OCI-LY7 (cell line): ENCODE measurements at regions of chr11 and their contacts with region 1.

Region 1: GRCh38 chr11:130314750-130315285 is at the start of gene ZBTB44:
- DNase-seq: peak; percentile 94
- H3K4me3 ChIP-seq: peak within 1 kb of the TSS; percentile 89
- H3K27ac ChIP-seq: peak within 1 kb of the TSS; percentile 78
- H3K4me1 ChIP-seq: peaks cover 42% of the 10 kb centered on the region
- CTCF ChIP-seq: no peak
- total RNA-seq, gene ZBTB44: 43.3 and 60.2 TPM in 2 replicates

Region 2: GRCh38 chr11:129930296-129930695 is 384.5 kb before region 1 on chr11:
- CTCF ChIA-PET with region 1: no interaction called
- POLR2A ChIA-PET with region 1: no interaction called
- intact Hi-C with region 1: no loop called
- DNase-seq: no peak
- H3K4me3 ChIP-seq: no peak overlapping the region
- H3K27ac ChIP-seq: no peak overlapping the region
- H3K4me1 ChIP-seq: peaks cover 6% of the 10 kb centered on the region
- CTCF ChIP-seq: no peak

Region 3: GRCh38 chr11:130166457-130166784 is 148.4 kb before region 1 on chr11:
- CTCF ChIA-PET with region 1: no interaction called
- POLR2A ChIA-PET with region 1: no interaction called
- intact Hi-C with region 1: loop called (anchors 5 kb)
- DNase-seq: peak; percentile 92
- H3K4me3 ChIP-seq: peak overlapping the region; percentile 57
- H3K27ac ChIP-seq: peak overlapping the region; percentile 93
- H3K4me1 ChIP-seq: peaks cover 99% of the 10 kb centered on the region
- CTCF ChIP-seq: no peak

Region 4: DNA sequence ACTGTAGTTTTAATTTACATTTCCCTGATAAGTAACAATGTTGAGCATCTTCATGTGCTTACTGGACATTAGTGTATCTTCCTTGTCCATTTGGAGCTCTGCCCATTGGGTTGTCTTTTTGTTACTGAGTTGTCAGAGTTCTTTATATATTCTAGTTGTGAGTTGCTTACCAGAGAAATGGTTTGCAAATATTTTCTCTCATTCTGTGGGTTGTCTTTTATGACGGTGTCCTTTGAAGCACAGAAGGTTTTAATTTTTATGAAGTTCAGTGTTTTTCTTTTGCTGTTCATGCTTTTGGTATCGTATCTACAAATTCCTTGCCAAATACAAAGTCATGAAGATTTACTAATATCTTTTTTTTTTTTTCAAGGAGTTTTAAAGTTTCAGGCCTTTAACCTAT is 42.5 kb before region 1 on chr11:
- CTCF ChIA-PET with region 1: no interaction called
- POLR2A ChIA-PET with region 1: no interaction called
- intact Hi-C with region 1: loop called (anchors 5 kb)
- DNase-seq: no peak
- H3K4me3 ChIP-seq: no peak overlapping the region
- H3K27ac ChIP-seq: no peak overlapping the region
- H3K4me1 ChIP-seq: peaks cover 18% of the 10 kb centered on the region
- CTCF ChIP-seq: no peak